Esophagus squamous epithelium (tissue), 5 donors: ENCODE measurements at regions of chr3 and their contacts with region 1.

Region 1: GRCh38 chr3:27712136-27713077 is 9.7 kb downstream of the EOMES start:
- DNase-seq: no peak
- H3K4me3 ChIP-seq: peak overlapping the region; percentile 34 to 68 (median 58)
- H3K27ac ChIP-seq: peak overlapping the region in 2 of 4 donors; percentile 38 to 44
- H3K4me1 ChIP-seq: peaks cover 18 to 39% (median 20%) of the 10 kb centered on the region in 3 donors
- H3K27me3 ChIP-seq: peaks cover 9 to 79% (median 16%) of the 10 kb centered on the region in 4 donors
- CTCF ChIP-seq: peak; percentile 53 to 82 (median 72)
- POLR2A ChIP-seq: no peak

Region 2: DNA sequence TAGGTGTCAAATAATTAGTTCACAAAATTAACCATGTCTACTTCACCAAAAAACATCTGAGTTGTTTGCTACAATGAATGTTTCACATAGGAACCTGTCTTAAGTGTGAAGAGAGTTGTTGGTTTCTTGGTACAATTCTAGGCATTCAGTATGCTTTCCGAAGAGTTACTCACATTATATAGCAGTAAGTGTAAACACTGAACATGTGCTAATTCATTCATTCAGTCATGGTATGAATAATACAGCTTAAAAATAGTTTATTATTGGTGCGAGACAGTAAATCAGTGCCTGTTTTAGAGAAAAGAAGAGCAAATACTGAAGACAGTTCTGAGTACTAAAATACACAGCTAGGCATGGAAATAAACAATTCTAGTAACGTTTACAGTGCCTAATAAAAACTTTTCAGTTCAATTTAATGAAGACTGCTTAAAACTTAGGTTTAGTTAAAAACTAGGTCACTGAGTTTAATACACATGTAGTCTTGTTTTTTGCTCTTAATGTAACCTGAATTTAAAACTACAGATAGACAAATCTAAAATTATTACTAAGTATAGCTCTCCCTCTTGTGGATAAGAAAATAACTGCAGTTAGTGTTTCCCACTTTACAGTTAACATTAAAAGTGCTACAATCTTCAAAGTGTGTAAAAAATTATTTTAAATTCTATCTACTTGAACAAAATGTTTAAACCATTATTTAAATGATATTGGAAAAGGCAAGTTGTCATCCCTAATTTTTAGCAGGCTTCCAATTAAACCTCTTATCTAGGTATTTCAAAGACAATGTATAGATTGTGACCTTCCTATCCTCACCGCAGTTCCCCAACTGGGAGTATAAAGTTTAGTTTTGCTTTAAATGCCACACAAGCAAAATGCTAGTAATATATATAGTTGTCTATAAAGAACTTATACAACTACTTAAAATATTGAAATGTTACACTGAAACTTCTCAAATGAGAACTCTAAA is 616.1 kb after region 1 on chr3:
- intact Hi-C with region 1: loop called (anchors 10 kb)
- DNase-seq: no peak
- H3K4me3 ChIP-seq: no peak overlapping the region
- H3K27ac ChIP-seq: no peak overlapping the region
- H3K4me1 ChIP-seq: no peaks in the 10 kb centered on the region
- H3K27me3 ChIP-seq: no peaks in the 10 kb centered on the region
- CTCF ChIP-seq: peak; percentile 33 to 83 (median 66)
- POLR2A ChIP-seq: no peak